WTC11 (cell line): ENCODE measurements at regions of chr9 and their contacts with region 1.

Region 1: GRCh38 chr9:121278535-121279261 is 10.7 kb downstream of the GSN start:
- DNase-seq: peak; percentile 43
- ATAC-seq: peak; percentile 85
- H3K4me3 Mint-ChIP-seq: no peak overlapping the region
- H3K27ac Mint-ChIP-seq: no peak overlapping the region
- H3K4me1 Mint-ChIP-seq: peaks cover 22% of the 10 kb centered on the region
- H3K27me3 Mint-ChIP-seq: peaks cover 52% of the 10 kb centered on the region
- CTCF ChIP-seq: peak; percentile 65

Region 2: DNA sequence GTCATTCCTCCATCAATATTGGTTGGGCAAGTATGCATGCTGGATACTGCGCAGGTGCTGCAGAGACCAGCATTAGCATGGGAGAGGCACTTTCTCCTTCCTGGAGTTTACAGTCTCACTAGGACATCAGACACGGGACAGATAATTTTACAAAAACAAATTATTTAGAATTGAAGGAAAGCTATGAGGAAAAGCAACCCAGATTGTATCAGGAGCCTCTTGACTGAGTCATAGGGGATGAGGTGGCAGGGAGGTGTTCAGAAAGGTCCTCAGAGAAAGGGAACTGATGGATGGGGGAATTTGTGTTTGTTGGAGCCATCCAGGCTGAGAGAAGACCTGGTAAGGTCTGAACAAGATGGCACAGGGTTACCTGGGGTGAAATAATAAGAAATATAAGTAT is 52.5 kb before region 1 on chr9:
- CTCF ChIA-PET with region 1: interaction called, 20 read pairs
- POLR2A ChIA-PET with region 1: no interaction called
- DNase-seq: no peak
- ATAC-seq: no peak
- H3K4me3 Mint-ChIP-seq: no peak overlapping the region
- H3K27ac Mint-ChIP-seq: no peak overlapping the region
- H3K4me1 Mint-ChIP-seq: peaks cover 19% of the 10 kb centered on the region
- H3K27me3 Mint-ChIP-seq: peaks cover 4% of the 10 kb centered on the region; the same call in 1 of the 2 replicates
- CTCF ChIP-seq: no peak

Region 3: GRCh38 chr9:121253821-121254471 is 24.8 kb before region 1 on chr9:
- CTCF ChIA-PET with region 1: interaction called, 12 read pairs
- POLR2A ChIA-PET with region 1: no interaction called
- DNase-seq: no peak
- ATAC-seq: peak; percentile 97
- H3K4me3 Mint-ChIP-seq: peak overlapping the region; percentile 8
- H3K27ac Mint-ChIP-seq: peak overlapping the region; percentile 21; the same call in 1 of the 2 replicates
- H3K4me1 Mint-ChIP-seq: peaks cover 13% of the 10 kb centered on the region
- H3K27me3 Mint-ChIP-seq: peaks cover 34% of the 10 kb centered on the region
- CTCF ChIP-seq: no peak

Region 4: DNA sequence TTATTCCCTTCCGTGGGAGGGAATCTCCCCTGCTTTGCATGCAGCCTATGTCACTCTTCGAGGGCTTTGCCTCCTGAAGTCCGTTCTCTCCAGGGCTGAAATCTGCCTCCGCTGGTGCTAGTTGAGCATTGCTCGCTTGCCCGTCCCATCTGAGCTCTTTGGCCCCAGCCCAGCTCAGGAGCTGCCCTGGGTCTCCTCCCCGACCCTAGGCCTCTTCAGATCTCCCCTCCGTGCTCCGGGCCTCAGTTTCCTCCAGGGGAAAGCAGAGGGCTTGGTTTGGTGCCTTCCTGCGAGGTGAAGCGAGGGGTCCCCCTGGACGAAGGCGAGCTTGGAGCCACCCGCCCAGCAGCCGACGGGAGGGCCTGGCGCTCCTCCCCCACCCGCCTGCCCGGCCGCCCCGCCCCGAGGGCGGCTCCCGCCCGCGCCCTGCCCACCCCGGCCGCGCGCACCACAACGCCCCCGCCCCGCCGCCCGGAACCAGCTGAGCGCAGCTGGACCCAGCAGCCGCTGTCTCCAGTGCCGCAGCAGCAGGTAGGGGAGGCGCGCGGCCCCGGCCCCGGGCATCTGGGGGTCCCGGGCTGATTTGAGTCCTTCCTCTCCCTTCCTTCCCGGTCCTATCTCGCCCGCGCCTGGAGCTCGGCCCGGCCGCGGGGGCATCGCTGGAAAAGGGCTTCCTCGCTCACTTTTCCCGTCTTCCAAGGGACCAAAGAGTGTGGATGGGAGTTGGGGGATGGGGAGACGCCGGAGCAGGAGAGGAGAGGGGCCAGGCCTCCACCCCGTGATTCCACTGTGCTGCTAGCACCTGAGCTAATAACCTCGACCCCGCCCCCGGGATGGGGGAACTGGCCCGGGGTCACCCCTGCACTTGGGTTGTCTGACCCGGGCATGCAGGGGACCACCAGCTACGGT is 10.8 kb before region 1 on chr9 and contains the start of gene GSN:
- CTCF ChIA-PET with region 1: interaction called, 74 read pairs
- POLR2A ChIA-PET with region 1: interaction called, 9 read pairs
- DNase-seq: peak; percentile 84
- ATAC-seq: peak; percentile 77
- H3K4me3 Mint-ChIP-seq: peak within 1 kb of the TSS; percentile 83
- H3K27ac Mint-ChIP-seq: peak within 1 kb of the TSS; percentile 41
- H3K4me1 Mint-ChIP-seq: peaks cover 51% of the 10 kb centered on the region
- H3K27me3 Mint-ChIP-seq: peaks cover 57% of the 10 kb centered on the region
- CTCF ChIP-seq: no peak
- total RNA-seq, gene GSN: 47.0 to 57.3 TPM (median 54.9 TPM) in 3 replicates